ENCODE measurements at regions of chr10 and their contacts with region 1.

Region 1: GRCh38 chr10:59906417-59907202 is at the start of gene CCDC6:
- DNase-seq: peak; percentile 90 to 92
- ATAC-seq: peak; percentile 86
- H3K4me3 ChIP-seq: peak within 1 kb of the TSS; percentile 81 to 98 (median 92)
- H3K27ac ChIP-seq: peak within 1 kb of the TSS; percentile 89 to 92 (median 90)
- H3K4me1 ChIP-seq: peaks cover 34 to 48% of the 10 kb centered on the region in 2 donors
- H3K27me3 ChIP-seq: no peaks in the 10 kb centered on the region
- CTCF ChIP-seq: peak; percentile 80 to 91 (median 81)
- POLR2A ChIP-seq: peak; percentile 84 to 88
- total RNA-seq, gene CCDC6: 26.6 to 43.3 (median 29.5) TPM

Region 2: GRCh38 chr10:58268870-58269605 is 1637.6 kb before region 1 on chr10 and contains the start of gene CISD1:
- in situ Hi-C with region 1: no loop called
- intact Hi-C with region 1: loop called (anchors 5 kb)
- DNase-seq: peak; percentile 98 to 99
- ATAC-seq: peak; percentile 81 to 83
- H3K4me3 ChIP-seq: peak within 1 kb of the TSS; percentile 62 to 89 (median 84)
- H3K27ac ChIP-seq: peak within 1 kb of the TSS; percentile 88 to 97 (median 96)
- H3K4me1 ChIP-seq: peaks cover 24 to 36% of the 10 kb centered on the region in 2 donors
- H3K27me3 ChIP-seq: no peaks in the 10 kb centered on the region
- CTCF ChIP-seq: peak in 1 of 5 experiments; percentile 4
- POLR2A ChIP-seq: peak; percentile 90 to 91
- total RNA-seq, gene CISD1: 54.4 to 90.2 (median 71.1) TPM

Region 3: GRCh38 chr10:59234816-59235429 is 671.7 kb before region 1 on chr10:
- in situ Hi-C with region 1: no loop called
- intact Hi-C with region 1: loop called (anchors 10 kb)
- DNase-seq: no peak
- ATAC-seq: no peak
- H3K4me3 ChIP-seq: no peak overlapping the region
- H3K27ac ChIP-seq: no peak overlapping the region
- H3K4me1 ChIP-seq: no peaks in the 10 kb centered on the region
- H3K27me3 ChIP-seq: no peaks in the 10 kb centered on the region
- CTCF ChIP-seq: peak; percentile 13 to 57 (median 49)
- POLR2A ChIP-seq: no peak

Region 4: GRCh38 chr10:59830601-59831259 is 75.9 kb before region 1 on chr10:
- in situ Hi-C with region 1: no loop called
- intact Hi-C with region 1: loop called (anchors 2 kb)
- DNase-seq: peak in 1 of 2 donors; percentile 31
- ATAC-seq: peak in 1 of 2 donors; percentile 70
- H3K4me3 ChIP-seq: no peak overlapping the region
- H3K27ac ChIP-seq: no peak overlapping the region
- H3K4me1 ChIP-seq: peaks cover 30 to 40% of the 10 kb centered on the region in 2 donors
- H3K27me3 ChIP-seq: no peaks in the 10 kb centered on the region
- CTCF ChIP-seq: peak; percentile 65 to 82 (median 72)
- POLR2A ChIP-seq: no peak

Region 5: GRCh38 chr10:59877191-59877671 is 29.4 kb before region 1 on chr10:
- in situ Hi-C with region 1: no loop called
- intact Hi-C with region 1: loop called (anchors 2 kb)
- DNase-seq: no peak
- ATAC-seq: peak; percentile 82 to 83
- H3K4me3 ChIP-seq: no peak overlapping the region
- H3K27ac ChIP-seq: peak overlapping the region in 2 of 4 donors; percentile 2 to 14
- H3K4me1 ChIP-seq: peaks cover 42 to 44% of the 10 kb centered on the region in 2 donors
- H3K27me3 ChIP-seq: no peaks in the 10 kb centered on the region
- CTCF ChIP-seq: no peak
- POLR2A ChIP-seq: no peak

Measured in gastrocnemius medialis (tissue), 4 donors.